ENCODE measurements at regions of chr17 and their contacts with region 1.

Region 1: DNA sequence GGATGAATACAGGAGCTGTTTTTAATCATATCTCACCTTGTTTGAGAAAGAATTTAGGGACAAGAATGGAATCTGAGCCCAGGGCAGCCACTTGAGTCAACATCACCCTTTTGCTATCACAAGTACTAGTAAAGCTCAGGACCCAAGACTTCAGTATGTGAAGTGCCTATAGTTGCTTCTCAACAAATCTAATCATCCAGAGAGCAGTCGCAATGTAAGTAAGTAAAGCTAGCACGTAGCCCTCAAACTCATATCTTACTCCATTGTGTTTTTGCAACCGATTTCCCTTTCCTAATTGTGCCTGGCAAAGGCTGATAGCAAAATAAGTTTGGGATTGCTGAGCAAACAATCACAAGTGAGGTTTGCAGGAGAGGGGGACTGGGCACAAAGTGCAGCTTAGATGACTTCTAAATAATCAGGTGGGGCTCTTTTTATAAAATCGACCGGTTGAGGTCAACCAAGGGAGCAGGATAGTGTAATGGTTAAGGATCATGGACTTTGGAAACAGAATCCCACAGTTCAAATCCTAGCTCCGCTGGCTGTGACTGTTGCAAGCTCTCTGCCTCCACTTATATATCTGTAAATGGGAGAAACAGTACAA is 13.0 kb downstream of the TOB1 start:
- DNase-seq: no peak
- H3K4me3 Mint-ChIP-seq: no peak overlapping the region
- H3K27ac Mint-ChIP-seq: no peak overlapping the region
- H3K4me1 Mint-ChIP-seq: peaks cover 14% of the 10 kb centered on the region
- H3K27me3 Mint-ChIP-seq: no peaks in the 10 kb centered on the region

Region 2: DNA sequence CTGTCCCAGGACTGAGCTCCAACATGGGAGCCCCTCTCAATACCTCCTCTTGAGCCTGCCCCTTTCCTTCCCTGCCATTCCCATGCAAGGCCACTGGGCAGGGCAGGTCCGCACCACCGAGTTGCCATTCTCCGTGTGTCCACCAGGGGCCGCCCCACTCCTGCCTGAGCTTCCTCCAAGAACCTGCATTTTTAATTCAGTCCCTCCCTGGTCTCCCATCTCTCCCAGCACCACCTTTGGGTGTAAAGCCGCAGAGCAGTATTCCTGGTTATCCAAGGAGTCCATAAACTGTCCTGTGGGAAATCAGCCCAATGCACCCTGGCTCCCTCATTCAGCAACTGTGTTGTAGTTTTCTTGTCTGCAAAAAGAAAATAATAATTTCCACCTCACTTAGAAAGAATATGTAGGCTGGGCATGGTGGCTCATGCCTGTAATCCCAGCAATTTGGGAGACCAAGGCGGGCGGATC is 69.9 kb before region 1 on chr17:
- CTCF ChIA-PET with region 1: interaction called, 24 read pairs
- POLR2A ChIA-PET with region 1: no interaction called
- intact Hi-C with region 1: no loop called
- DNase-seq: peak; percentile 89
- H3K4me3 Mint-ChIP-seq: peak overlapping the region; percentile 17
- H3K27ac Mint-ChIP-seq: peak overlapping the region; percentile 49
- H3K4me1 Mint-ChIP-seq: peaks cover 22% of the 10 kb centered on the region
- H3K27me3 Mint-ChIP-seq: peaks cover 3% of the 10 kb centered on the region

Region 3: DNA sequence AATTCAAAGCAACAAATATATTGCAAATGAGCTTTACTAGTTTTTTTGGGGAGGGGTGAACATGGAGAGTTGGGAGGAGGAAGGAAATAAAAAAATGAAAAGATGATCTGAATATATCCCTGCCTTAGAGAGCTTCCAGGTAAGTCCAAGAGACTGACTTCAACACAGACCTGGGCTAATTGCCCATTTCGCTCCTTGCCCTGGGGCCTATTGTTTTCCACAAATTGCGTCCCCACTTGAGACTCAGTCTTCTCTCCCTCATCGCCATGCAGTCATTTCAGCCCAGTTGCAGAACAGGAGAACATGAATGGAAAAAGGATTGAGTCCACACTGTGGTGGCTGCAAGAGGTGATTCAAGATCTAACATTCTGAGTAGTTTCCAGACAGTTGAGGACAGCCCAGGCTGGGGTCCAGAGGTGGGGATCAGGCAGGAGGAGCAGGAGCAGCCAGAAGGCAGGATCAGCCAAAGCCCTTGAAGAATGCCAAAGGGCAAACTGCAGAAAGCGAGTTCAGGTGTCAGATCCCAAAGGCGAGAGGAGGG is 34.7 kb after region 1 on chr17:
- CTCF ChIA-PET with region 1: interaction called, 10 read pairs
- POLR2A ChIA-PET with region 1: no interaction called
- intact Hi-C with region 1: no loop called
- DNase-seq: no peak
- H3K4me3 Mint-ChIP-seq: no peak overlapping the region
- H3K27ac Mint-ChIP-seq: peak overlapping the region; percentile 30
- H3K4me1 Mint-ChIP-seq: peaks cover 23% of the 10 kb centered on the region
- H3K27me3 Mint-ChIP-seq: no peaks in the 10 kb centered on the region

Region 4: DNA sequence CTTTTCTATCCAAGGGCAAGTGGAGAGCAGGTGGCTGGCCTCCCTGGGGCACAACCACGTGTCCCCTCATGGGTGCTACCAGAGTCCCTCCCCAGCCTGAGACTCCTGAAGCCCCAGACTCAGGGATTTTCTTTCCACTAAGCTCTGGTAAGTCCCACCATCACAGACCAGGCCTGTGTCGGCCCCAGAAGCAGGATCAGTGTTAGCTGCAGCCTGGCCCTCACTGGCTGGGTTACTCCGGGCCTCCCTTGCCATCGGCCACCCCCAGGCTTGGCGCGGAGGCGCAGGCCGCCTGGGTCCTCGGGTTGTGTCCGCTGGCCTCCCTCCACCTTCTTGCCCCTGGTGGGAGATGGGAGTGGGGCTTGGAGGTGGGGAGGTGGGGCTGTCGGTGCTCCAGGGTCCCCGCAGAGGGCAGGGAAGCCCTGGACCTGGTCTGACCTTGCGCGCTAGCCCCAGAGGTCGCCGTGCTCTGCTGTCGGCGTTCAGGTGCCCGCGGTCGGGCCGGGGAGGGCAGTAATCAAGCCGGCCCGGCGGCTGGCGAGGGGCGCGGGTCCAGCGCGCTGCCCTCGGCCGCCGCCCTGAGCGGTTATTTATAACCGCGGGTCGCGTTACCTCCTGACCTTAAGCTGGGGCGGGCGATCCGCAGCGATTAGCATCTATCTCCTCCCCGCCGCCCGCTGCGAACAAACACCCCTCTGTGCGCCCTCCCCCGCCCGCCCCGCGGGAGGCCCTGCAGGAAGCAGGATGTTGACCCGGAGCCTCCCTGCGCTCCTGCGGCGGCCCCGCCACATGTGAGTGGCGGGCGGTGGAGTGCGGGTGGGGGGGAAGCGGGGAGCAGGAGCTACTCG is 91.2 kb after region 1 on chr17:
- CTCF ChIA-PET with region 1: interaction called, 84 read pairs
- POLR2A ChIA-PET with region 1: interaction called, 11 read pairs
- intact Hi-C with region 1: no loop called
- DNase-seq: peak; percentile 88
- H3K4me3 Mint-ChIP-seq: peak overlapping the region; percentile 76
- H3K27ac Mint-ChIP-seq: peak overlapping the region; percentile 86
- H3K4me1 Mint-ChIP-seq: peaks cover 23% of the 10 kb centered on the region
- H3K27me3 Mint-ChIP-seq: no peaks in the 10 kb centered on the region

Region 5: DNA sequence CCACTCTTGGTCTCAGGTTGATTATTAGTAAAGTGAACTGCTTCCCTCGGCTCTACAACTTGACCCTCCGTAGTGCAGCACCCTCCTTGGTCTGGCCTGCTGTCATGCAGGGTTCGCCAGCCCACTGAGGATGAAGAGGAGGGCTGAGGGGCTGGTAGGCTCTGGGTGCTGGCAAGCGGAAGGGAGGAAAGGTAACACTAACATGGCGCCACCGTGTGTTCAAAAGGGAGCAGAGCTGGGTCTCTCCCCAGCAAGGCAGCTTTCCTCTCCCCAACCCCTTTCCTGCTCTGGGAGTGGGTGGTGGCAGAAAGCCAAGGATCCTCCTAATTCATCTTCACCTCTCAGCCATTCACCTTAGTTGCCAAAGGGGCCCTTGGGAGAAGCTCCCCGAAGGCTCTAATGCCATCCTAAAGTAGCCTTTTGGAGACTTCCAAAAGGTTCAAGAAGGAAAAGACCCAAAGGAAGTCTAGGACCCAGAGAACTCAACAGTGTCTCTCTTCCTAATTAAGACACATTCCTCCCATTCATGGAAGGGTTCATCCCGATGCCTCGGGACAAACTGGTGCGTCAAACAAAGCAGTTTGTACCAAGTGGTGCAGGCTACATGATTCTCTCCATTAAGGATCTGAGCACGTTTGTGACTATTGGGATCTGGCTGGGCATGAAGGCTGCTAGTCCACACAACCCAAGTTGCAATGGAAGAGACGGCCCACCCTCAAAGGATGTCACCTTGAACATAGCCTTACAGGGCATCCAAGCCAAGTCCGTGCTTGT is 103.8 kb after region 1 on chr17:
- CTCF ChIA-PET with region 1: interaction called, 147 read pairs
- POLR2A ChIA-PET with region 1: no interaction called
- intact Hi-C with region 1: loop called (anchors 1 kb)
- DNase-seq: peak; percentile 77
- H3K4me3 Mint-ChIP-seq: no peak overlapping the region
- H3K27ac Mint-ChIP-seq: peak overlapping the region; percentile 44
- H3K4me1 Mint-ChIP-seq: peaks cover 2% of the 10 kb centered on the region
- H3K27me3 Mint-ChIP-seq: no peaks in the 10 kb centered on the region

Measured in activated CD4-positive, alpha-beta memory T cell treated with anti-CD3 and anti-CD28 coated beads for 36 hours (primary cell).